Activated B cell treated with CpG ODN at 0.5 μM for 24 hours (primary cell): ENCODE measurements at regions of chr5 and their contacts with region 1.

Region 1: GRCh38 chr5:67165526-67166459 is 30.8 kb downstream of the CD180 start:
- DNase-seq: peak; percentile 67
- ATAC-seq: peak; percentile 86
- H3K4me3 Mint-ChIP-seq: peak overlapping the region; percentile 86
- H3K27ac Mint-ChIP-seq: peak overlapping the region; percentile 95
- H3K4me1 Mint-ChIP-seq: peaks cover 26% of the 10 kb centered on the region
- H3K27me3 Mint-ChIP-seq: no peaks in the 10 kb centered on the region
- CTCF ChIP-seq: no peak

Region 2: DNA sequence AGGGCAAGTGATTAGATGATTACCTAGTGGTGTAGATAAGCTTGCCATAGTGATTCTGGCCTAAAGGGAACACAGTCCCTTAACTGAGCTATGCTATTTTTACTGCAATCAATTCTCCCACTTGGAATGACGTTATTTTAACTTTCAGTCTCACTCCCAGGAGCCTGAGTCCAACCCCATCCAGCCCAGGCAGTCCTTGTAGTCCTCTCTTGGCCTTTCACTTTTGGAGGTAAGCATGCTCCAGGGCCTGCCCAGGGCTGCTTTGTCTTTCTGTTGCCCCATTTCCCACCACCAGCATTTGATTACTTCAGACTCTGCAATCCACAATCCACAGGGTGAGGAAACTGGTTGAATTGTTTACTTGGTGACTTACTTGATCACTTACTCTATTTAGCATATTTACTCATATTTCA is 202.2 kb before region 1 on chr5:
- CTCF ChIA-PET with region 1: no interaction called
- POLR2A ChIA-PET with region 1: no interaction called
- intact Hi-C with region 1: no loop called
- DNase-seq: no peak
- ATAC-seq: no peak
- H3K4me3 Mint-ChIP-seq: no peak overlapping the region
- H3K27ac Mint-ChIP-seq: no peak overlapping the region
- H3K4me1 Mint-ChIP-seq: no peaks in the 10 kb centered on the region
- H3K27me3 Mint-ChIP-seq: peaks cover 3% of the 10 kb centered on the region
- CTCF ChIP-seq: no peak

Region 3: GRCh38 chr5:66981266-66982055 is 184.3 kb before region 1 on chr5:
- CTCF ChIA-PET with region 1: no interaction called
- POLR2A ChIA-PET with region 1: interaction called, 10 read pairs
- intact Hi-C with region 1: no loop called
- DNase-seq: no peak
- ATAC-seq: no peak
- H3K4me3 Mint-ChIP-seq: no peak overlapping the region
- H3K27ac Mint-ChIP-seq: no peak overlapping the region
- H3K4me1 Mint-ChIP-seq: peaks cover 3% of the 10 kb centered on the region
- H3K27me3 Mint-ChIP-seq: peaks cover 7% of the 10 kb centered on the region
- CTCF ChIP-seq: no peak

Region 4: DNA sequence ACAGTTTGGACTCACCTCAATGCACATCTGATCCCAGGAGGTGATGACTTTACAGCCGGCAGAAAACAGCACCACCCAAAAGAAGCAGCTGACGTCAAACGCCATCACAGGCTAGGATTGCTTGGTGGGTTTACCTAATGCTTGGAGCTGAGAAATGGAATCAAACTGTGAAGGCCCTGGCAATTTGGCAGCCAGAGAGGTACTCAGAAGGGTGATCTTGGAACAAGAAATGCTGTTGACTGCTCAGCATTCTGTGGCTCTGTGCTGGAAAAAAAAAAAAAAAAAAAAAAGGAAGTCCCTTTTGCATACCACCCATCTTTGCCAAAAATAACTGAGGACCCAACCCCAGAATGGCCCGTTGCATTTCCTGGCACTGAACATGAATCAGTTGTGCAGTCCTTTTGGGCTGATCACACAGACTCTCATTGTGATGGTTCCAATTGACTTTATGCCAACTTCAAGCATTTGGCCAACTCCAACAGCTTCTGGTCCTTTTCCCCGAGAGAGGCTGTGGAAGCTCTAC is 30.8 kb after region 1 on chr5 and contains the start of gene CD180:
- CTCF ChIA-PET with region 1: interaction called, 9 read pairs
- POLR2A ChIA-PET with region 1: interaction called, 214 read pairs
- intact Hi-C with region 1: loop called (anchors 1 kb)
- DNase-seq: no peak
- ATAC-seq: peak; percentile 32
- H3K4me3 Mint-ChIP-seq: peak within 1 kb of the TSS; percentile 91
- H3K27ac Mint-ChIP-seq: peak within 1 kb of the TSS; percentile 98
- H3K4me1 Mint-ChIP-seq: peaks cover 97% of the 10 kb centered on the region
- H3K27me3 Mint-ChIP-seq: no peaks in the 10 kb centered on the region
- CTCF ChIP-seq: no peak
- total RNA-seq, gene CD180: 32.6 and 35.7 TPM in 2 replicates

Region 5: GRCh38 chr5:67221487-67222242 is 55.9 kb after region 1 on chr5:
- CTCF ChIA-PET with region 1: interaction called, 4 read pairs
- POLR2A ChIA-PET with region 1: interaction called, 18 read pairs
- intact Hi-C with region 1: no loop called
- DNase-seq: no peak
- ATAC-seq: peak; percentile 75
- H3K4me3 Mint-ChIP-seq: peak overlapping the region; percentile 78
- H3K27ac Mint-ChIP-seq: peak overlapping the region; percentile 97
- H3K4me1 Mint-ChIP-seq: peaks cover 65% of the 10 kb centered on the region
- H3K27me3 Mint-ChIP-seq: no peaks in the 10 kb centered on the region
- CTCF ChIP-seq: no peak

Region 6: DNA sequence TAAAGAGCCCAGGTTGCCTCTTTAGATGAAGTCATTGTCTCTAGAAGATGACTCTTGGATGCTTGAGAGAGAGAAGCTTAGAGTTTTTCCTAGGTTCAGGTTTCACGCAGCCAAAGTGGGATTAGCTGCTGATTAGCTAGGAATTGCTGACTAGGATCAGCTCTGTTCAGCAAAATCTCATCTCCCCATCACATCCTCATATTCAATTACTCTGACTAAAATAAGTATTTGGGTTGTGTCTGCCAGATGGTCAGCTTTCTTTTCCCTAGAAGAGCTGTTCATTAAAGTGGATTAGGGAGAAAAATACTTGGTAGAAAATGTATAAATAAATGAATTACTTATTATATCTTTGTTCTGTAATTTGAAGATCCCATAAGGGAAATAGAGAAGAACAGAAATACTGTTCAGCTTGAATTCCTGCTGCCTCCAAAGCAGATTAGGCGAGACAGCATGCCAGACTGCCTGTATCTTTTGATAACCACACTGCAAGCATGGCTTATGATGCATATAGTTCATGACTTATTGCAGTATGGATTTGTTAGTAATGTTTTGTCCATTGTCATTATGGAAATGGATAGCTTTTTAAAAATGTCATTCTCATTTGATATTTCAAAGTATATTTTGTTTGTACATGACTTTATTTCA is 215.6 kb after region 1 on chr5:
- CTCF ChIA-PET with region 1: no interaction called
- POLR2A ChIA-PET with region 1: no interaction called
- intact Hi-C with region 1: no loop called
- DNase-seq: no peak
- ATAC-seq: no peak
- H3K4me3 Mint-ChIP-seq: no peak overlapping the region
- H3K27ac Mint-ChIP-seq: no peak overlapping the region
- H3K4me1 Mint-ChIP-seq: no peaks in the 10 kb centered on the region
- H3K27me3 Mint-ChIP-seq: peaks cover 9% of the 10 kb centered on the region
- CTCF ChIP-seq: no peak

Region 7: DNA sequence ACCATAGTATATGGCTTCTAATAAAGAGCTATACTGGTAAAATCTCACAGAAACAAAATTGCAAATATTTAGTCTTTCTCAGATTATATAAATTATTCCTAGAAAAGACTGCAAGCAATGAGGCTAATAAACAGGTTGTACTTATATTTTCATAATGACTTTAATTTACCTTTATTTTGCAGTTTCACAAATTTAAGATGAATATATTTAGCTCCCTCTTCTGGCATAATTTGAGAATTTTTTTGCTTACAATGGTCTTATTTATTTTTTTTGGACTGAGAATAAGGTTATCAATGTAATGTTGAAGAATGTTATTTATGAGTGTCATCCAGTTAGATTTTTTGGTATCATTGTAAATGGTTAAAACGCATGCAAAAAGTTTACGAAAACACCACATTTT is 1106.5 kb after region 1 on chr5:
- CTCF ChIA-PET with region 1: no interaction called
- POLR2A ChIA-PET with region 1: no interaction called
- intact Hi-C with region 1: loop called (anchors 5 kb)
- DNase-seq: no peak
- ATAC-seq: no peak
- H3K4me3 Mint-ChIP-seq: no peak overlapping the region
- H3K27ac Mint-ChIP-seq: no peak overlapping the region
- H3K4me1 Mint-ChIP-seq: peaks cover 40% of the 10 kb centered on the region
- H3K27me3 Mint-ChIP-seq: no peaks in the 10 kb centered on the region
- CTCF ChIP-seq: no peak